GM23248 (cell line): ENCODE measurements at regions of chr16 and their contacts with region 1.

Region 1: DNA sequence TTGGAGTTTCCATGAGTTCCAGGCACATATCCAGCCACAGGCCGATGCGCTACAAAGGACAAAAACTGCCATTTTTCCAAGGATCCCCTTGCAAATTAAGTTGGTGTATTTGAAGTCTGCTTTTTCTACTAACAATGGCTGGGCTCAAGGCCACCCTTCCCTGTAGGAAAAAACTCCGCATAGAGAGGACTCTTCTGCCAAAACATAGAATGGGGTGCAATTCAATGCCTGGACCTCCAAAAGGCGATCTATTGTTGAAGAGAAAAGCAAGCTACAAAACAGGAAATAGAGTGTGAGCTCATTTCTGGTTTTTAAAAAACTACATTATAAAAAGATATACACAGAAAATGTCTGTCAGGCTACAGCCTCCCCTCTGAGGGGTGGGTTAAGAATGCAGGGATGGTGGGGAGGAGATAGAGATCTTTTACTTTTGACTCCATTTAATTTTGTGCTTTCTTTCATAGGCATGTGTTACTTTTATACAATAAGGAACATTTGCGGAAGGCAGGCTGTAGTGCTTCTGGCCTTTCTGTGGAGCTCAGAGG is 22.9 kb upstream of the PRSS54 start:
- DNase-seq: no peak
- H3K4me3 ChIP-seq: no peak overlapping the region
- H3K27ac ChIP-seq: no peak overlapping the region
- H3K4me1 ChIP-seq: no peaks in the 10 kb centered on the region
- H3K27me3 ChIP-seq: peaks cover 5% of the 10 kb centered on the region; the same call in 1 of the 2 replicates

Region 2: GRCh38 chr16:58025351-58026138 is 292.1 kb before region 1 on chr16 and contains the start of gene MMP15:
- in situ Hi-C with region 1: loop called (anchors 10 kb)
- DNase-seq: peak; percentile 73
- H3K4me3 ChIP-seq: peak within 1 kb of the TSS; percentile 68
- H3K27ac ChIP-seq: no peak within 1 kb of the TSS
- H3K4me1 ChIP-seq: peaks cover 10% of the 10 kb centered on the region
- H3K27me3 ChIP-seq: no peaks in the 10 kb centered on the region; the same call in 1 of the 2 replicates
- total RNA-seq, gene MMP15: 1.4 and 1.6 TPM in 2 replicates

Region 3: GRCh38 chr16:58187092-58187491 is 130.6 kb before region 1 on chr16:
- in situ Hi-C with region 1: no loop called
- DNase-seq: no peak
- H3K4me3 ChIP-seq: no peak overlapping the region
- H3K27ac ChIP-seq: no peak overlapping the region
- H3K4me1 ChIP-seq: peaks cover 6% of the 10 kb centered on the region; the same call in 1 of the 2 replicates
- H3K27me3 ChIP-seq: no peaks in the 10 kb centered on the region

Region 4: GRCh38 chr16:58264961-58265479 is 52.7 kb before region 1 on chr16:
- in situ Hi-C with region 1: no loop called
- DNase-seq: peak; percentile 89
- H3K4me3 ChIP-seq: no peak overlapping the region
- H3K27ac ChIP-seq: no peak overlapping the region; the same call in 1 of the 2 replicates
- H3K4me1 ChIP-seq: peaks cover 9% of the 10 kb centered on the region; the same call in 1 of the 2 replicates
- H3K27me3 ChIP-seq: no peaks in the 10 kb centered on the region

Region 5: DNA sequence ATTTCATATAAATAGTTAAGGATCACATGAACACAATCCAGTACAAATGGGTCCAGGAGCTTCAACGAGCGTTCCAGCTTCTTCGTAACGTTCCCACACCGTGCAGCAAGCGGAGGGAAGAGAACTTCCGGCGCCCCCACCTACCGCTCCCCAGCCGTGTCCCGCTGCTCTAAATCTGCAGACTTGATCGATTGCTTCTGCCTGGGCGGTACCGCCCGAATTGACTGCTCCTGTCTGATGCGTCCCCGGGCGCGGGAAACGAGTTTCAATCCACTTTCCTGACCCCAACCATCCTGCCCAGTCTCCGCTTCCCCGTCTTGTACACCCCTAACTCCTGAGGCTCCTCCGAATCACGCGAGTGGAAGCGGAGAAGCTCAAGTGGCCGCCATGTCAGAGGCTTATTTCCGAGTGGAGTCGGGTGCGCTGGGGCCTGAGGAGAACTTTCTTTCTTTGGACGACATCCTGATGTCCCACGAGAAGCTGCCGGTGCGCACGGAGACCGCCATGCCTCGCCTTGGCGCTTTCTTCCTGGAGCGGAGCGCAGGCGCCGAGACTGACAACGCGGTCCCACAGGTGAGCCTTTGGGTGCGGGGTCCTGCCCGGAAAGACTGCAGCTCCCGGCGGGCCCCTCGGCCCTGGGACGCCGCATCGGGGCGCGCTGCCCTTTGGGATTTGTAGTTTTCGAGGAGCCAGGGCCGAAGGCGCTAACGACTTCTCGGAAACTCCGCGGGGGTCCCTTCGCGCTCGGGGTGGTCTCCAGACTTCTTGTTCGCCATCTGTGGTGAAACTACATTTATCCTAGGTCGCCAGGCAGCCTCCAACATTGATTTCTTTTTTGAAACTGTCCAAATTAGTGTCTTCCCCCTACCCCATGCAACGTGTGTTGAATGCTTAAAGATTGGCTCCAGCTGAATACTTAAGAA is 74.8 kb after region 1 on chr16 and contains the start of gene GINS3:
- in situ Hi-C with region 1: no loop called
- DNase-seq: peak; percentile 88
- H3K4me3 ChIP-seq: peak within 1 kb of the TSS; percentile 94
- H3K27ac ChIP-seq: peak within 1 kb of the TSS; percentile 27
- H3K4me1 ChIP-seq: no peaks in the 10 kb centered on the region
- H3K27me3 ChIP-seq: no peaks in the 10 kb centered on the region
- total RNA-seq, gene GINS3: 2.9 and 7.7 TPM in 2 replicates

Region 6: DNA sequence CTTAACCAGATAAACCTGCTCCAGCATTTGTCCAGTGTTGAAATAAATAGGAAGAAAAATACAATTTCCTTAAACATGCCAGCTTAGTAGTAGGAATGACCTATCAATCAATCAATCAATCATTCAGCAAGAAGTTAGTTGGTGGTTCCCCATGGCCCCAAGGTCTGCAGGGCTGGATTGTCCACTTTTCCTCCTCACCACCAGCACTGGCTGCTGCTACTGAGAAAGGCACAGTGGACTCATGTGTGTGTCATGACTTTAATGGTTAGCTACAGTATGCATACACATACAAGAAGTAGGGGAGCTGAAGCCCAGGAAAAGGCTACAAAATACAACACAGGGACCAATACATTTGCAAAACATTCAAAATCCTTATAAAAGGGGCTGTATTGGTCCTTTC is 202.0 kb after region 1 on chr16:
- in situ Hi-C with region 1: no loop called
- DNase-seq: no peak
- H3K4me3 ChIP-seq: no peak overlapping the region
- H3K27ac ChIP-seq: no peak overlapping the region
- H3K4me1 ChIP-seq: no peaks in the 10 kb centered on the region
- H3K27me3 ChIP-seq: no peaks in the 10 kb centered on the region